SK-N-SH (cell line): ENCODE measurements at regions of chr12 and their contacts with region 1.

Region 1: GRCh38 chr12:120971299-120972179 is 6.8 kb upstream of the HNF1A start:
- DNase-seq: peak; percentile 78
- H3K4me3 ChIP-seq: no peak overlapping the region
- H3K27ac ChIP-seq: no peak overlapping the region
- H3K4me1 ChIP-seq: peaks cover 0 to 2% of the 10 kb centered on the region in 2 experiments; a peak in 1 of 4 replicates
- H3K27me3 ChIP-seq: no peaks in the 10 kb centered on the region; the same call in 1 of the 2 replicates
- CTCF ChIP-seq: peak; percentile 78
- EP300 ChIP-seq: peak in 1 of 2 experiments; percentile 17; a peak in 1 of 4 replicates
- RAD21 ChIP-seq: peak; percentile 91

Region 2: GRCh38 chr12:120720234-120720986 is 251.1 kb before region 1 on chr12:
- CTCF ChIA-PET with region 1: interaction called, 11 read pairs
- POLR2A ChIA-PET with region 1: no interaction called
- DNase-seq: no peak
- H3K4me3 ChIP-seq: no peak overlapping the region
- H3K27ac ChIP-seq: peak overlapping the region; percentile 50 to 73
- H3K4me1 ChIP-seq: peaks cover 5 to 33% of the 10 kb centered on the region in 2 experiments; a peak in 3 of 4 replicates
- H3K27me3 ChIP-seq: no peaks in the 10 kb centered on the region
- CTCF ChIP-seq: no peak
- EP300 ChIP-seq: no peak
- RAD21 ChIP-seq: no peak

Region 3: GRCh38 chr12:120955232-120955631 is 16.3 kb before region 1 on chr12:
- CTCF ChIA-PET with region 1: interaction called, 26 read pairs
- POLR2A ChIA-PET with region 1: interaction called, 6 read pairs
- DNase-seq: no peak
- H3K4me3 ChIP-seq: no peak overlapping the region
- H3K27ac ChIP-seq: no peak overlapping the region
- H3K4me1 ChIP-seq: no peaks in the 10 kb centered on the region
- H3K27me3 ChIP-seq: no peaks in the 10 kb centered on the region
- CTCF ChIP-seq: no peak
- EP300 ChIP-seq: no peak
- RAD21 ChIP-seq: no peak

Region 4: GRCh38 chr12:120984351-120984898 is 12.9 kb after region 1 on chr12:
- CTCF ChIA-PET with region 1: interaction called, 23 read pairs
- POLR2A ChIA-PET with region 1: no interaction called
- DNase-seq: peak; percentile 79
- H3K4me3 ChIP-seq: no peak overlapping the region
- H3K27ac ChIP-seq: 0 out of 4 replicates have a peak overlapping the region, but pooled peaks of 1 of the 2 experiments have one; percentile 8
- H3K4me1 ChIP-seq: peaks cover 0 to 5% of the 10 kb centered on the region in 2 experiments; a peak in 1 of 4 replicates
- H3K27me3 ChIP-seq: no peaks in the 10 kb centered on the region
- CTCF ChIP-seq: no peak
- EP300 ChIP-seq: no peak
- RAD21 ChIP-seq: no peak

Region 5: DNA sequence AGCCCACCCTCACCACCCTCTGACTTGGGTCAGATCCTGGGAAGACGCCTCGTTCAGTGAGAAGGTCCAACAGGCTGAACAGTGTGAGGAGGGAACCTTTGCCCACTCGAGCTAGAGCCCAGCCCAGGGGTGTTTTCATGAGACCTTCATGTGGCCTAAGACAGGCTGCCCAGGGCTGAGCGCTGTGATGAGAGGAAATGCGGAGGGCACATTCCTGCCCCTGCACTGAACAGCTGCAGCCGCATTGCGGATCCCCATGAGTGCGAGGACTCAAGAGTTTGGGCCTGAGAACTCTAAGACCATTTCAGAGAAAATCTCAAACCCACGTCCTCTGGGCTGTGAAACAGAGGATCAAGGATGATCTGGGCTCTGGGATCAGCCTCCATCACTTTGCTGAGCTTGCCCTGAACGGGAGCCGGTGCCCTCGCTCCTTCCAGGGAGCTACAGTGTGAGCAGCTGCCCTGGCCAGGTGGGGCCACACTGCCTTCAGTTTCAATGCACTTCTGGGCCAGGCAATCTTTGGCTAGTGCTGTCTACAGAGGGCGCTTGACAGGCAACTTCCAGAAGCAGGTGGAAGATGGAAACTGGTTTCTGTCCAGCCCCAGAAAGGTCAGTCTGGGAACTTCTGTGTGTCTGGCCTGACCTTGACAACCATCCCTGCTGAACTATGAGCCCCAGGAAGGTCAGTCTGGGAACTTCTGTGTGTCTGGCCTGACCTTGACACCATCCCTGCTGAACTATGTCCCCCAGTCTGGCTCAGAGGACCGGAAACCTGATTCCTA is 117.7 kb after region 1 on chr12:
- CTCF ChIA-PET with region 1: no interaction called
- POLR2A ChIA-PET with region 1: no interaction called
- DNase-seq: no peak
- H3K4me3 ChIP-seq: no peak overlapping the region
- H3K27ac ChIP-seq: no peak overlapping the region
- H3K4me1 ChIP-seq: no peaks in the 10 kb centered on the region
- H3K27me3 ChIP-seq: peaks cover 7% of the 10 kb centered on the region; the same call in 1 of the 2 replicates
- CTCF ChIP-seq: no peak
- EP300 ChIP-seq: no peak
- RAD21 ChIP-seq: no peak